ENCODE measurements at regions of chr1 and their contacts with region 1.

Region 1: DNA sequence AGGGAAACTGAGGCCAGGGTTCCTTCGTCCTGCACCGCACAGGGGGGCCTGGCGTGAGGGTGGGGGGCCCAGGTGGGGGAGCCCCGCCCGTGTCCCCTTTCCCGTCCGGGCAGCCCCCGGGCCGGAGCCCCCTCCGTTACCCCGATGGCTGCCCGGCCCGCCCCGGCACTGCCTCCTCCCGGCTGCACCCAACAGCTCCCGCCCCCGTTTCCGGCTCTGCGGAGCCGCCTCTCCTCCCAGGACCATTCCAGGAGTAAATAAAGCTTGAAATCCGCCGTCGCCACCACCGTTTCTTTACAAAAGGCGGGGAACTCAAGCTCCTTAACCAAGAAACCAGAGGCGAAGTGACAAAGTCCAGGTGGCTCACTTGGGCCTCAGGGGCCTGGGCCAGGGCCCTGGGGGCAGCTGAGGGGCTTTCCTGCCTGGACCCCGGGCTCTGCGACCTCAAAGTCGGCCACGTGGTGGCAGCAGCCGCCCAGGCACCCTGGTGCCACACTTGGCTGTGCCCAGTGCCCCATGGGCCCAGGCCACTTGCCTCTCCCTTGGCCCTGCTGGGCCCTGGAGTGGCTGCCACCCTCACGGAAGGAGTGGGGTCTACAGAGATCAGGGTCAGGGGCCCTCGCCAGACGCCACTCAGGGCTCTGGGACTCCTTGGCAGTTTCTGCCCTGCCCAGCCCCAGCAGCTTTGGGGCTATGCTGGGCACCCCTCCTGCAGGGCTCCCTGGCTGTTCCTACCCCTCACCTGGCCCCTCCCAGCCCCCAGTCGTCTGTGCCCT is 514 bp upstream of the FAAP20 start:
- DNase-seq: peak; percentile 85
- H3K4me3 ChIP-seq: peak overlapping the region; percentile 33 to 81 (median 56)
- H3K27ac ChIP-seq: peak overlapping the region; percentile 45
- H3K4me1 ChIP-seq: peaks cover 37% of the 10 kb centered on the region
- H3K27me3 ChIP-seq: no peaks in the 10 kb centered on the region
- CTCF ChIP-seq: peak; percentile 70 to 97

Region 2: DNA sequence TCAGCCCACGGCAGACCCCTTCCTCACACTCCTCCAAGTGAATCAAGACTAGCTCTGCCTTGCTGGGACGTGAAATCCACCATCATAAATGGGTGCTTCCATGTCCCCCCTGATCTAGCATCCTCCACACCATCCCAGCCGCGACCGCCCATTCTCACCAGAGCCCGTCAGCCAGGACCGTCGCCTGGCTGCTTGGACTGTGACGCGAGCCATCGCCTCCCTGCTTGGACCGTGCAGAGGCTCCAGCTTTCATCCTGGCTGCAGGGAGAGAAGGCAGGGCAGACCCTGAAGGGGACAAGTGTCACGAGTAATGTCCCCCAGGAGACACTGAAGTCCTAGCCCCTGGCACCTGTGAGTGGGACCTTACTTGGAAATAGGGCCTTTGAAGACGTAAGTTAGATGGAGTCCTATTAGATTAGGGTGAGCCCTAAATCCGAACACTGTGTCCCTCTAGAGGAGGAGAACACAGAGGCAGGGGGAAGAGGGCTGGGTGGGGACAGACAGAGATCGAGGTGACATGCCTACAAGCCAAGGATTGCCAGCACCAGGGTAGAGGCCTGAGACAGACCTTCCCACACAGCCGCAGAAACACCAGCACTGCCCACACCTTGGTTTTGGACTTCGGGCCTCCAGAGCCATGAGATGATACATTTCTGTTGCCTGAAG is 157.6 kb before region 1 on chr1:
- CTCF ChIA-PET with region 1: no interaction called
- dilution Hi-C with region 1: no loop called
- in situ Hi-C with region 1: no loop called
- intact Hi-C with region 1: no loop called
- DNase-seq: no peak
- H3K4me3 ChIP-seq: no peak overlapping the region
- H3K27ac ChIP-seq: no peak overlapping the region
- H3K4me1 ChIP-seq: no peaks in the 10 kb centered on the region
- H3K27me3 ChIP-seq: peaks cover 2% of the 10 kb centered on the region
- CTCF ChIP-seq: no peak

Region 3: GRCh38 chr1:2270260-2271100 is 75.4 kb after region 1 on chr1:
- CTCF ChIA-PET with region 1: no interaction called
- dilution Hi-C with region 1: loop called (anchors 5 kb)
- in situ Hi-C with region 1: no loop called
- intact Hi-C with region 1: no loop called
- DNase-seq: no peak
- H3K4me3 ChIP-seq: no peak overlapping the region
- H3K27ac ChIP-seq: no peak overlapping the region
- H3K4me1 ChIP-seq: peaks cover 17% of the 10 kb centered on the region
- H3K27me3 ChIP-seq: no peaks in the 10 kb centered on the region
- CTCF ChIP-seq: no peak

Region 4: DNA sequence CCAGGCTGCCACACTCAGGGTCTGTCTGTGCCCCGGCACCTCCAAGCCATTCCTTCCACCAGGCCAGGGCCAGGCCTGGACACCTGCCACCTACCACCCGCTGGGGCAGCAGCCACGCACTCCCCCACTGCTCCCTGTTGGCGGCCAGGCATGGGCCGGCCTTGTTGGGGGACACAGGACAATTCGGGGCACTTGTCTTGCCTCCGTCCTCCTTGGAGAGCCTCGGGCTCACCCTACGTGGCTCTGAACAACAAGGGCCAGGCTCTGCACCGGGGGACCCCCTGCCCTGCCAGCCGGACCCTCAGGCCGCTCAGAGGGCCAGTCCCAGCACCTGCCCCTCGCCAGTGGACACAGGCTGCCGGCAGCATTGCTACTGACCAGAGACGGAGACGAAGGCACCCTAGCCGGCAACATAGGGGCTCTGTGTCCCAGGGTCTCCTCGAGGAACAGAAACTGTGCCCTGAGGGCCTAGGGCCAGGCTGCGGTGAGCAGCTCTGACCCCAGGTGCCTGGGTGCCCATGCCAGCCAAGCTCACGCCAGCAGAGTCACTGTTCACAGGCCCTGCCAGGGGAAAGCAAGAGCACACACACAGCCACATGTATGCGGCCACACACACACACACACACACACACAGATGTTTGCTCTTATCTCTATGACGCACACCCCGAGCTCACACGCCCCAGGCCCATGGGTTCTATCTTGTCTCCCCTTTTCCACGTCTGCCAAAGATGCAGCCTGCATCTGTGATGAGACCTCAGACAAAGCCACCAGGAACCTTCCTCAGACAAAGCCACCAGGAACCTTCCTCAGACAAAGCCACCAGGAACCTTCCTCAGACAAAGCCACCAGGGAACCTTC is 150.4 kb after region 1 on chr1:
- CTCF ChIA-PET with region 1: no interaction called
- dilution Hi-C with region 1: loop called (anchors 10 kb)
- in situ Hi-C with region 1: no loop called
- intact Hi-C with region 1: no loop called
- DNase-seq: no peak
- H3K4me3 ChIP-seq: no peak overlapping the region
- H3K27ac ChIP-seq: no peak overlapping the region
- H3K4me1 ChIP-seq: peaks cover 7% of the 10 kb centered on the region
- H3K27me3 ChIP-seq: no peaks in the 10 kb centered on the region
- CTCF ChIP-seq: no peak

Region 5: GRCh38 chr1:2514863-2515762 is 320.0 kb after region 1 on chr1:
- CTCF ChIA-PET with region 1: no interaction called
- dilution Hi-C with region 1: loop called (anchors 5 kb)
- in situ Hi-C with region 1: no loop called
- intact Hi-C with region 1: no loop called
- DNase-seq: no peak
- H3K4me3 ChIP-seq: no peak overlapping the region
- H3K27ac ChIP-seq: no peak overlapping the region
- H3K4me1 ChIP-seq: no peaks in the 10 kb centered on the region
- H3K27me3 ChIP-seq: no peaks in the 10 kb centered on the region
- CTCF ChIP-seq: peak in 1 of 2 donors; percentile 14

Region 6: GRCh38 chr1:2545759-2546514 is 350.9 kb after region 1 on chr1:
- CTCF ChIA-PET with region 1: no interaction called
- dilution Hi-C with region 1: no loop called
- in situ Hi-C with region 1: loop called (anchors 10 to 25 kb)
- intact Hi-C with region 1: loop called (anchors 1 kb)
- DNase-seq: peak; percentile 57
- H3K4me3 ChIP-seq: peak overlapping the region in 2 of 3 experiments; percentile 43 to 44
- H3K27ac ChIP-seq: no peak overlapping the region
- H3K4me1 ChIP-seq: peaks cover 31% of the 10 kb centered on the region
- H3K27me3 ChIP-seq: no peaks in the 10 kb centered on the region
- CTCF ChIP-seq: no peak

Region 7: GRCh38 chr1:3423245-3423829 is 1228.3 kb after region 1 on chr1:
- CTCF ChIA-PET with region 1: no interaction called
- dilution Hi-C with region 1: no loop called
- in situ Hi-C with region 1: loop called in 1 of 2 experiments (anchors 25 kb)
- intact Hi-C with region 1: loop called (anchors 2 kb)
- DNase-seq: no peak
- H3K4me3 ChIP-seq: no peak overlapping the region
- H3K27ac ChIP-seq: no peak overlapping the region
- H3K4me1 ChIP-seq: no peaks in the 10 kb centered on the region
- H3K27me3 ChIP-seq: peaks cover 2% of the 10 kb centered on the region
- CTCF ChIP-seq: no peak